HCT116 (cell line): ENCODE measurements at regions of chr7 and their contacts with region 1.

Region 1: DNA sequence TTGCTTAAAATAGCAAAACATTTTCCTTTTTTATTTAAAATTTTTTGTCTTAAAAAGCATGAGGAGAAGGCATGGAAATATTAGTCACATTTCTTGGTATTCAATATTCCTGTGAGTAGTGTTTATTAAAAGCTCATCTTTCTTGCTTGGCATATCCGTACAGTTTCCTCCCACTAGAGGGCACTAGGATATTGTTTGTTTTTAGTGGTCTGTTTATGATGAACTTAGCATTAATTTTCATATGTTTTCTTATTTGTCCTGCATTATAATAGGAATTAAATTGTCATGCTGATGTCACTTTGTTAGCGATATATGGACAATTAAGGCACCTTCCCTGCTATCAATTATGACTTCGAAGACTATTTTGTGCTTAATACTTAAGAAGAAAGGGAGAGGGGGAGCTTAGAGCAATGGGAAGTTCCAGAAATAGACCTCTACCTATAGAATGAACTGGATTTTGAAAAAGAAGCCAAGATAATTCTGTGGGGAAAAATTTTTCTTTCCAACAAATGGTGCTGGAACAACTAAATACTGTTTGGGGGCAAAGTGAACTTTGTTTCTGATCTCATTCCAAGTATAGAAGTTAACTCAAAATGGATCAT is 91.0 kb upstream of the STRIP2 start:
- DNase-seq: peak; percentile 37
- ATAC-seq: peak; percentile 77
- H3K4me3 ChIP-seq: no peak overlapping the region
- H3K27ac ChIP-seq: no peak overlapping the region
- H3K4me1 ChIP-seq: no peaks in the 10 kb centered on the region
- H3K27me3 ChIP-seq: no peaks in the 10 kb centered on the region
- CTCF ChIP-seq: peak; percentile 65 to 75 (median 71)
- POLR2A ChIP-seq: no peak
- RAD21 ChIP-seq: peak; percentile 70

Region 2: DNA sequence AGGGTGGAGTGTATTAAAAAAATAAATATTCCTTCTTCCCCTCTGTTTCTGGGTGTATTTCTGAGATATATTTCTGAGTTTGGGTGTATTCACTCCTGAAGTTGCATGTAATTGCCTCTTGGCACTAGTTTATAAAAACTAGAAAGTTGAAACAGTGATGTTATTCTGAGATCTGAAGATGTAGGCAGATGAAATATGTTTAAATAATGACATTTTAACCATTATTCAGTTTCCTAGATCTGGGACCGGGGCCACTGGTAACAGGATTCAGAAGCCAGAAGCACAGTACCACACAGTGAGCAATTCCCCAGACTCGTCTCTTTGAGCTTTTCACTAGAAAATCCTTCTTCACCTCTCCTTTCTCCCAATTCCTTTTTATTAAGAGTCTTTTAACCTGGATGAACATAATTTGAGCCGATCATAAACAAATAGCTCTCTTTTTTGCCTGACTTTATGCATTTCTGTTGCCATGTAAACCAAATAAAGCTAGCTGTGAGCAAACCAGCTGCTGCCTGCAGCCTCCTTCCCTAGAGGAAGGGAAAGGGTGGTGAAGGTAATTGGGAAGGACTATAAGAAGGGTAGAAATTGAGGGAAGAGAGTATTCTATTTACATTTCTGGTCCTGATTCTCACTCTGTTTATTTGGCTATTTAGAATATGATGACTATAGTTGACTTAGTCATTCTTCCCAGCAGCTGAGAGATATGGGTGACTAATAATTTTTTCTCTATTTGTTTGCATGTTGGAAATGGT is 10.7 kb before region 1 on chr7:
- CTCF ChIA-PET with region 1: interaction called, 20 read pairs
- POLR2A ChIA-PET with region 1: no interaction called
- RAD21 ChIA-PET with region 1: no interaction called
- intact Hi-C with region 1: no loop called
- DNase-seq: no peak
- ATAC-seq: no peak
- H3K4me3 ChIP-seq: no peak overlapping the region
- H3K27ac ChIP-seq: no peak overlapping the region
- H3K4me1 ChIP-seq: no peaks in the 10 kb centered on the region
- H3K27me3 ChIP-seq: no peaks in the 10 kb centered on the region
- CTCF ChIP-seq: no peak
- POLR2A ChIP-seq: no peak
- RAD21 ChIP-seq: no peak

Region 3: DNA sequence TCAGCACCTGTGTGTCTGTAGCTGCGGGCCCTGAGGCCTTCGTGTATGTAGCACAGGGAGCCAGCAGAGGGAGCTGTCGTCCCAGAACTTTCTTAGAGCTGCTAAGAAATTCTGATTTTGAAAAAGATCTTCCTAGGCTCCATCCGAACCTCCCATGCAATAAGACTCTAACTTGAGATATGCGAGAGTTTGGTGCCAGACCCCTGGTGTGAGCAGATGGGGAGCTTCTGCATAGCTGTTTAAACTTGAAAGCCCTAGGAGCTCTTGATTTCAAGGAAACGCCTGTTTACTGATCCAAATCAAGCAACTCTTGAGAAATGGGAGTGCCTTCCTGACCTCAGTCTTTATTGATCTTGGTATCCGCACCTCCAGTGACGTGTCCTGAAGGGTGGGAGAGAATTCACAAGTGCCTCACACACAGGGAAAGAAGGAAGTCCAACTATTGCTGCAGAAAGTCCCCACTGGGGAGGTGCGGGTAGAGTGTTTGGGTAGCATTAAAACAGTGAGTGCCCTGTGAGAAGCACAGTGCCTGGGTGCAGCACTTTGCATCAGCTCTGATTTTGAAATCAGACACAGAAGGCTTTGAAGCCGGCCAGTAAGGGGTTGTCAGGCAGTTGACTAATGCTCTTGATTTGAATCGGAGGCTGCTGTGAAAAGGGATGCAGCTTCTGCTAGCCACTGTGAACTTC is 24.6 kb after region 1 on chr7:
- CTCF ChIA-PET with region 1: interaction called, 14 read pairs
- POLR2A ChIA-PET with region 1: no interaction called
- RAD21 ChIA-PET with region 1: no interaction called
- intact Hi-C with region 1: no loop called
- DNase-seq: peak; percentile 49
- ATAC-seq: peak; percentile 95
- H3K4me3 ChIP-seq: no peak overlapping the region
- H3K27ac ChIP-seq: no peak overlapping the region
- H3K4me1 ChIP-seq: peaks cover 2 to 8% of the 10 kb centered on the region in 2 experiments; a peak in 2 of 4 replicates
- H3K27me3 ChIP-seq: no peaks in the 10 kb centered on the region
- CTCF ChIP-seq: peak; percentile 80 to 90 (median 86)
- POLR2A ChIP-seq: no peak
- RAD21 ChIP-seq: peak; percentile 91

Region 4: DNA sequence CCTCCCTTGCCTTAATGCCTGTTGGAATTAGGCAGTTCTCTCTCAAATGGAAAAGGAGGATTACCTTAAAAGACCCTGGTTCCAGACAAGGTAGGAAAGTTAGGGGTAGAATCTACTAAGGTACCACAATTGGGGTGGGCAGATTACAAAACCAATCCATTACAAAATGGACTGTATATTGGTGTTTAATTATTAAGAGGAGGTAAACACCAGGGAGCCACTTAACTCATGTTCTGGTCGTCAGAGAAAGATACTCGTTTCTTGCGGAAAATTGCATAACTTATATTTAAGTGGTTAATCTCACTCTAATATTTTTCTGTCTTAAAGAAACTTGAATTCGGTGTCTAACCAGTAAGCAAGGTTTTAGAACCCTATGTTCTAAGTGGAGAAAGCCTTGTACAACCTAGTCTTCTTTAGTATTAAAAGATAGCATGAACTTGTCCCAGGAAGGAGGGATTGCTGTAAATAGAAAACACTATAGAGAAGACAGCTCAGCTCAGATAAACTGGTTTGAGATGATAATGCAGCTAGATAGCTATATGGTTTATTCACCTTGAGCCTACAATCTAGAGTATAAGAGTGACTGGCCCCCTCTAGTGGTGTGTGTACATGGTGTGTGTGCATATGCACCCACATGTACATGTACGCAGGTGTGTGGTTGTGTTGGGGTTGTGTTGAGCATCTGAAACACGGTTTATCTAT is 33.0 kb after region 1 on chr7:
- CTCF ChIA-PET with region 1: interaction called, 12 read pairs
- POLR2A ChIA-PET with region 1: no interaction called
- RAD21 ChIA-PET with region 1: no interaction called
- intact Hi-C with region 1: no loop called
- DNase-seq: peak; percentile 32
- ATAC-seq: peak; percentile 100
- H3K4me3 ChIP-seq: no peak overlapping the region
- H3K27ac ChIP-seq: no peak overlapping the region
- H3K4me1 ChIP-seq: no peaks in the 10 kb centered on the region
- H3K27me3 ChIP-seq: no peaks in the 10 kb centered on the region
- CTCF ChIP-seq: peak; percentile 30 to 83 (median 81); a peak in 5 of 6 replicates
- POLR2A ChIP-seq: no peak
- RAD21 ChIP-seq: peak; percentile 47

Region 5: DNA sequence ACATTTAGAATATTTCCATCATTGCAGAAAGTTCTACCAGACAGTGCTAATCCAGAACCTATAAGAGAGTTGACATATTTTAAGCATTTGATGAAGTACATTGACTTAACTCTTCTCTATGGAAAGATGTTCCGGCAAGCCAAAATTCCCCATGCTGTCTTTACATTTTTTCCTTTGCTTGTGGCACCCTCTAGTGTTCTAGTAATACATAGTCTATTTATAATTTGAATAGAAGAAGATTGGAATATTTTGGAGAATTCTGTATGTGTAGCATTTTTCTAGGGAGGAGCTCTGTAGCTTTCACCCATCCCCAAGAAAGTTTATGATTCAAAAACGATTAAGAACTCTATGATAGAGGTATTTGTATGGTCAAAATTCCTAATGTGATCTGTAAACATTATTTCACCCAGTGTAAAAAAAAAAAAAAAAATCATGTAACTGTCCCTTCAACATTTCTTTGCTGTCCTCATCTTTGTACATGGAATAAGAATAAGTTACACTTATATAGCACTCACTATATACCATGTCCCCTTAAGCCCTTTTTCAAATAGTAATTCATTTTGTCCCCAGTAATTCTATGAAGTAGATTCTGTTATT is 301.5 kb after region 1 on chr7:
- CTCF ChIA-PET with region 1: interaction called, 16 read pairs
- POLR2A ChIA-PET with region 1: no interaction called
- RAD21 ChIA-PET with region 1: interaction called in 1 of 2 experiments, 3 read pairs
- intact Hi-C with region 1: no loop called
- DNase-seq: peak; percentile 38
- ATAC-seq: peak; percentile 60
- H3K4me3 ChIP-seq: no peak overlapping the region
- H3K27ac ChIP-seq: no peak overlapping the region
- H3K4me1 ChIP-seq: peaks cover 8 to 16% of the 10 kb centered on the region in 2 experiments; a peak in 3 of 4 replicates
- H3K27me3 ChIP-seq: no peaks in the 10 kb centered on the region
- CTCF ChIP-seq: peak; percentile 33 to 64 (median 59)
- POLR2A ChIP-seq: no peak
- RAD21 ChIP-seq: peak; percentile 76